ENCODE measurements at regions of chr2 and their contacts with region 1.

Region 1: GRCh38 chr2:171703574-171704347 is 16.5 kb downstream of the DYNC1I2 start:
- DNase-seq: peak; percentile 35 to 59 (median 44)
- ATAC-seq: peak; percentile 86
- H3K4me3 ChIP-seq: no peak overlapping the region
- H3K27ac ChIP-seq: no peak overlapping the region
- H3K4me1 ChIP-seq: no peaks in the 10 kb centered on the region
- H3K27me3 ChIP-seq: no peaks in the 10 kb centered on the region
- CTCF ChIP-seq: peak; percentile 58 to 78 (median 61)
- EP300 ChIP-seq: no peak
- POLR2A ChIP-seq: no peak
- RAD21 ChIP-seq: peak; percentile 69 to 71

Region 2: GRCh38 chr2:171598713-171599319 is 104.9 kb before region 1 on chr2:
- CTCF ChIA-PET with region 1: no interaction called
- POLR2A ChIA-PET with region 1: interaction called, 5 read pairs
- in situ Hi-C with region 1: loop called (anchors 5 kb)
- intact Hi-C with region 1: loop called (anchors 2 kb)
- DNase-seq: peak; percentile 79 to 82 (median 81)
- ATAC-seq: peak; percentile 99
- H3K4me3 ChIP-seq: no peak overlapping the region
- H3K27ac ChIP-seq: no peak overlapping the region
- H3K4me1 ChIP-seq: no peaks in the 10 kb centered on the region
- H3K27me3 ChIP-seq: peaks cover 15 to 17% of the 10 kb centered on the region in 2 experiments; a peak in 4 of 5 replicates
- CTCF ChIP-seq: peak; percentile 76 to 90 (median 88)
- EP300 ChIP-seq: no peak
- POLR2A ChIP-seq: no peak
- RAD21 ChIP-seq: peak; percentile 70 to 89

Region 3: DNA sequence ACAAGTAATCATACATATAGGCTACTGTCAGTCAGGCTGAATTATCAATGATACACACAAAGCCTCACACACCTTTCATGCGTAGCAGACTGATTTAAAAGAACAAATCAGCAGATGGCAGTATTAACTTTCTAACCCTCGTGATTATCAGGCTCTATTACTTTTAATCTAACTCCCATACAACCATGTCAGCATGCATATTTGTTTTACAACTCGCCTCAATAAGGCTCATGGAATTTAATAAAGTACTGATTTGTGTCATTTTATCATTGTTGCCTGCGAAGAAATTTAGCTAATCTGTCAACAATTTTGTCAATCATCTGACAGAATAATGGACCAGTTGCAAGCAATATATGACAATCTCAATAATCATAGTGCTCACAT is 107.5 kb after region 1 on chr2:
- CTCF ChIA-PET with region 1: no interaction called
- POLR2A ChIA-PET with region 1: no interaction called
- in situ Hi-C with region 1: no loop called
- intact Hi-C with region 1: loop called (anchors 10 kb)
- DNase-seq: peak in 1 of 4 experiments; percentile 37
- ATAC-seq: peak; percentile 77
- H3K4me3 ChIP-seq: no peak overlapping the region
- H3K27ac ChIP-seq: no peak overlapping the region
- H3K4me1 ChIP-seq: no peaks in the 10 kb centered on the region
- H3K27me3 ChIP-seq: no peaks in the 10 kb centered on the region
- CTCF ChIP-seq: peak; percentile 45 to 81 (median 56)
- EP300 ChIP-seq: no peak
- POLR2A ChIP-seq: no peak
- RAD21 ChIP-seq: peak; percentile 91 to 97

Region 4: DNA sequence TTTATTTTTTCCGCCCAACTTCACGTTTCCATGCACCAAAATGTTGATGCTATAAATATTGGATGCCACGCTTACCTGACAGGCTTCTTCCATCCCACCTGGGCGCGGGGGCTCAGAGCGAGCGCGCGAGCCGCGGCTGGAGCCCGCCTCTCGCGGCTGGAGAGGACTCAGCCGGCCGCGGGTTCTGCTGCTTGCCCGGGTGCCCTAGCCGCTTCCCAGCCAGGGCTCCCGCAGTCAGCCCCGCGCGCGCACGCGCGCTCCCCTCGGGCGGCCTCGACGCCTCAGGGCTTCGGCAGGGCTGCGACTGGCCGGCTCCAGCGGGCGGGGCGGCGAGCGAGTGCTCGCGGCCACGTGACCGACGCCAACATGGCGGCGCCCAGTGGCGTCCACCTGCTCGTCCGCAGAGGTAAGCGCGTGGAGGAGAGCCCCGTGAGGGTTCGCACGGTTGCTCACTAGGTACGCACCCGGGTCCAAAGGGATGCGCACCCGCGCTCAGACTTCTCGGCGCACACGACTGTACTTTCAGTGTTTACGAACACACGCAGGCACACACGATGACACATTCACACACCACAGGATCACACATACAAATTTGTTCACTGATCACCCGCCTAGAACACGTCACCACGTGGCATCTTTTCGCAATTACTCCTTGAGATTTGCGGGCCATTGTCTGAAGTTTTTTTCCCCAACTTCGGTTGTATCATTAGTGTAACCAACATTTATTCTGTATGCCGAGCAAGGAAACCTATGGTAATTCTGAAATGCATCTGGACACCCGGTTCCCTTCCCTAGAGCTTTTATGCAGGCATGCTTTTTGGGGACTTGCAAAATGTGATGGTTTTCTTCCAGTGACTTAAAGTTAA is 296.1 kb after region 1 on chr2 and contains the start of gene METAP1D:
- CTCF ChIA-PET with region 1: no interaction called
- POLR2A ChIA-PET with region 1: no interaction called
- in situ Hi-C with region 1: no loop called
- intact Hi-C with region 1: loop called (anchors 10 kb)
- DNase-seq: peak; percentile 98 to 99 (median 98)
- ATAC-seq: peak; percentile 98
- H3K4me3 ChIP-seq: peak within 1 kb of the TSS; percentile 56
- H3K27ac ChIP-seq: peak within 1 kb of the TSS; percentile 93
- H3K4me1 ChIP-seq: peaks cover 6 to 13% of the 10 kb centered on the region in 2 experiments; a peak in 4 of 5 replicates
- H3K27me3 ChIP-seq: no peaks in the 10 kb centered on the region
- CTCF ChIP-seq: peak in 1 of 3 experiments; percentile 2; a peak in 2 of 6 replicates
- EP300 ChIP-seq: no peak
- POLR2A ChIP-seq: peak; percentile 94
- RAD21 ChIP-seq: peak; percentile 38 to 50; a peak in 3 of 4 replicates
- polyA plus RNA-seq, gene METAP1D: 8.0 to 10.4 TPM

Region 5: GRCh38 chr2:172113617-172114016 is 409.9 kb after region 1 on chr2:
- CTCF ChIA-PET with region 1: interaction called, 18 read pairs
- POLR2A ChIA-PET with region 1: no interaction called
- in situ Hi-C with region 1: loop called (anchors 5 kb)
- intact Hi-C with region 1: no loop called
- DNase-seq: peak; percentile 39 to 70 (median 48)
- ATAC-seq: peak; percentile 92
- H3K4me3 ChIP-seq: no peak overlapping the region
- H3K27ac ChIP-seq: no peak overlapping the region
- H3K4me1 ChIP-seq: peaks cover 0 to 5% of the 10 kb centered on the region in 2 experiments; a peak in 1 of 5 replicates
- H3K27me3 ChIP-seq: peaks cover 2 to 6% of the 10 kb centered on the region in 2 experiments; a peak in 3 of 5 replicates
- CTCF ChIP-seq: peak; percentile 57 to 82 (median 73); a peak in 5 of 6 replicates
- EP300 ChIP-seq: no peak
- POLR2A ChIP-seq: no peak
- RAD21 ChIP-seq: peak; percentile 85 to 97

Region 6: GRCh38 chr2:172465417-172466334 is 761.9 kb after region 1 on chr2:
- CTCF ChIA-PET with region 1: interaction called, 5 read pairs
- POLR2A ChIA-PET with region 1: interaction called, 3 read pairs
- in situ Hi-C with region 1: no loop called
- intact Hi-C with region 1: loop called (anchors 10 kb)
- DNase-seq: peak; percentile 68 to 76 (median 72)
- ATAC-seq: peak; percentile 90
- H3K4me3 ChIP-seq: no peak overlapping the region
- H3K27ac ChIP-seq: no peak overlapping the region
- H3K4me1 ChIP-seq: no peaks in the 10 kb centered on the region
- H3K27me3 ChIP-seq: peaks cover 11 to 23% of the 10 kb centered on the region in 2 experiments; a peak in 4 of 5 replicates
- CTCF ChIP-seq: peak; percentile 86 to 92 (median 90)
- EP300 ChIP-seq: no peak
- POLR2A ChIP-seq: no peak
- RAD21 ChIP-seq: peak; percentile 90 to 92

Measured in K562 (cell line).